ENCODE measurements at regions of chr11 and their contacts with region 1.

Region 1: DNA sequence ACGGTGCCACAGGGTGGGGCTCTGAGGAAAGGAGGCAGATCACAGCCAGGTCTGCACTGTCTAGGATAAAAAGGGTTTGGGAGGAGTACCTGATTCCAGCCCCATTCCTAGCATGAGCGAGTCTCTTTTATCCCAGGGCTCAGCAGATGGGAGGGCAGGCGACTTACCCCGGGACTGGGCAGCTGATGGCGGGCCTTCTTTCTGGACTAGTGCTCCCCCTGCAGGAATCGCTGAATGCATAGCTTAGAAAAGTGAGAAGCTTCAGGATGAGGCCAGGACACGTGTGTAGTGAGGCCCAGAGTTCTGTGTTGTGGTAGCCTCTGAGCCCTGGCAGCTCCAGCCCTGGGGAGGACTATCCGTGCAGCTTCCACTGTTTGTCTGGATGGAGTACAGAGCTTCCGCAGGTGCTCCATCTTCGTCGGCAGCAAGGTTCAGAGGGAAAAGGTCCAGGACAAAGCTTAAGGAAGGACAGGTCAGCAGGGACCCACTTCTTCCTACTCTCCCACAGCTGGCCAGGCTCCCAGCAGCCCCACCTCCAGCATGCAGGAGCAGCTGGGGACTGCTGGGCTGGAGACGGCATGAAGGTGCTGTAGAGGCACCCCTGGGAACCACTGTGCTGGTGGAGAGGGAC is 30.4 kb downstream of the COMMD9 start:
- DNase-seq: no peak

Region 2: DNA sequence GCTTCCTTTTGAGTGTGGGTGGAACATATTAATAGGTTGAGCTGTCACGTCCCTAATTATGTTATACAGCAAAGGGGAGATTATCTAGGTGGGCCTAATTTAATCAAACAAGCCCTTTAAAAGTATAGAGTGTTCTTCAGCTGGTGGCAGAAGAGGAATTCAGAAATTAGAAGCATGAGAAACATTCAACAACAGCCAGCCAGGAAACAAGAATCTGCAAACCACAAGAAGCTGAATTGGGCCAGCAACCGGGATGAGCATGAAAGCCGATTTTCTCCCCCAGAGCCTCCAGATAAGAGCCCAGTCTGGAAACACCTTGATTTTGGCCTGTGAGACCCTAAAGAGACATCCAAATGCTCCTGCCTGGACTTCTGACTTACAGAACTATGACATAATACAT is 420.8 kb before region 1 on chr11:
- intact Hi-C with region 1: loop called in 1 of 2 experiments (anchors 10 kb)
- DNase-seq: no peak

Region 3: DNA sequence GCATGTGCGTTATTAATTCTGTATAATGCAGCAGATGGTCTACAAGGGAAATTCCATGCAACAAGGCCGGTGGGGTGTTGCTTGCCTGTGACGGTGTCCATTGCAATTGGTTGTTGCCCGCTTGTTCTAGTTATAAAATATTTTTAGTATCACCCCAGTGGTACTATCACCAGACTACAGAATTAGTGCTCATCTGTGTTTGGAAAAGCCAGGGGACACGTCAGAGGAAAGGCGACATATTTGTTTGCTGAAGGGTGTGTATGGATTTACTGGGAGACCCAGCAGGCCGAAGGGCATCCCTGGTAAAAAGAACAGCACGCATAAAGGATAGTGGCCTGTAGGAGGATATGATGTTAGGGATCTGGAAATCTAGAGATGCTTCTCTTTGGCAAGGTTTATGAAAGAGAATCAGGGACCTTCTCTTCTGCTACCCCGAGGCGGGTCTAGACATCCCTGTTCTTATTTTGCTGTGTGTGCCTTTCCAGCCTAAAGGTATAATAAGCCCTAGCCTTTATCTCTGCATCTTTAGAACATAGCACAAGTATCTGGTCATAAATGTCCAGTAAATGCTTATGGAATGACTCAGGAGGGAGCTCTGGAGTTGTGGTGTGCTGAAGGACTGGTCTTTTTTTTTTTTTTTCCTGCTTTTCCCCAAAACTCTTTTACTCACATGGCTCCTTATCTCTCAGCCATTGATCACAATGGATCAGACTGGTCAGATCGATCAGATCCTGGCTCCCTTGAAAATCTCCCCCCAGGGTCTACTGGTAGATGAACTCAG is 224.1 kb before region 1 on chr11:
- intact Hi-C with region 1: loop called in 1 of 2 experiments (anchors 10 kb)
- DNase-seq: no peak

Region 4: GRCh38 chr11:36131721-36132397 is 127.0 kb before region 1 on chr11:
- intact Hi-C with region 1: loop called in 1 of 2 experiments (anchors 10 kb)
- DNase-seq: peak; percentile 87

Measured in posterior vena cava (tissue), 2 donors.